Ascending aorta (tissue), 2 donors: ENCODE measurements at regions of chr6 and their contacts with region 1.

Region 1: DNA sequence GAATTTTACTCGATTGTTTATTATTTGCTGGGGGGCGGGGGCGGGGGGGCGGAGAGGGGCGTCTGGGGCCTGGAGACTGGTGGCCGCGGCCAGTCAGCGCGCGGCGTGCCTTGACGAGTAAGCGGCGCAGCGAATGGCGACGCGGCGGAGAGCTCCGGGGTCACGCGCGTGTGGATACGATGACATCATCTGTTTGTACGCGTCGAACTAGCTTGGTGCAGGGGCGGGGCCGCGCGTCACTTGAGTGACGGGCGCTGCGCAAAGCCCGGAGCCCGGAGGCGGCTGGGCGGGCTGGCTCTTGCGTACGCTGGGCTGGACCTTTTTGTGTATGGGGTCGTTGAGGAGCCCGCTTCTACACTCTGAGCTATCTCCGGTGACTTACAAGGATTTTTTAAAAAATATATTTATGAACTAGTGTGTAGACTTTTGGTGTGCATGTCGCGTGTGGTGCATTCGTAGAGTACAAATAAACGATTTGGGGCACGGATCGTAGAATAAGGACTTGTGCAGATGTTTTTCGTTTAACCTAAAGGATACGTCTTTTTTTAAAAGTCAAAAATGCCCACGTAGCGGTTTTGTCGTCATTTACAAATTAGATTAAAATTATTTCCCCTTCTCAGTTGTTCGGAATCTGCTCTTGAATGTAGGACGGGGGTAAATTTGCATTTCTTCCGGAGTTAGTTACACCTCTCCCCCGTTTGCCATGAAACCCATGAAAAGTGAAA is 2.2 kb upstream of the FOXO3 start:
- DNase-seq: peak; percentile 92 to 99
- H3K4me3 ChIP-seq: peak overlapping the region; percentile 87 to 93
- H3K27ac ChIP-seq: peak overlapping the region; percentile 98
- H3K4me1 ChIP-seq: peaks cover 4 to 14% of the 10 kb centered on the region in 2 donors
- H3K27me3 ChIP-seq: no peaks in the 10 kb centered on the region
- CTCF ChIP-seq: no peak

Region 2: GRCh38 chr6:108186226-108186625 is 372.3 kb before region 1 on chr6:
- intact Hi-C with region 1: no loop called
- DNase-seq: peak in 1 of 2 donors; percentile 40
- H3K4me3 ChIP-seq: no peak overlapping the region
- H3K27ac ChIP-seq: no peak overlapping the region
- H3K4me1 ChIP-seq: no peaks in the 10 kb centered on the region
- H3K27me3 ChIP-seq: no peaks in the 10 kb centered on the region
- CTCF ChIP-seq: no peak

Region 3: DNA sequence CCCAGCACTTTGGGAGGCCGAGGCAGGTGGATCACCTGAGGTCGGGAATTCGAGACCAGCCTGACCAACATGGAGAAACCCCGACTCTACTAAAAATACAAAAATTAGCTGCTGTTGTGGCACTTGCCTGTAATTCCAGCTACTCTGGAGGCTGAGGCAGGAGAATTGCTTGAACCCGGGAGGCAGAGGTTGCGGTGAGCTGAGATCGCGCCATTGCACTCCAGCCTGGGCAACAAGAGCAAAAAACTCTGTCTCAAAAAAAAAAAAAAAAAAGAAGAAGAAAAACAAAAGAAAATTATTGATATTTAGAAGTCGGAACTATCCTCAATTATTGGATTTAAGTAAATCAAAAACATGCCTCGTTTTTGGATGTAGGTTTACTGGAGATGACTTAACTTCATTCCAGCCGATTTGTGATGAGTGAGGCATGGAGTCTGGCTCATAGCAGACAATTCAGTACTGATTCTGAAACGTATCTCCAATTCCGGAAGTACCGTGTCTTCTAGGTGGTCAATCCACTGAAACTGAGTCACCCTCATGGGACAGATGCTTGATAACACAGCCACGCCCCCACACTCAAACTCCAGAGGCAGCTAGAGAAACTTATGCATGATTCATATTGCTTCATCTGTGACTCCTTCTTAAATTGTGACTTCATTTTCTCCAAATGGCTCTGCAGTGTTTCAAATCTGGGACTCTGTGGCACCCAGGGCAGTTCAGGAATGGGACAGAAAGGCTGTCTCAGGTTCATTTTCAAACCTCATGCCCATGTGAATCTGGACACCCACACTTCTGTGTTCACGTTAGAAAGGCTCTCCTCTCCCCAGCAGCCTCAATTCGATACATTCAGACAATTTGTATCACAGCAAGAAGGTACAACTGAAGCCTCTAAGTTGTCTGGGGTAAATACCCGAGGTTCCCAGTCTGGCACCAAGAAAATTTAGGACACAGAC is 179.3 kb after region 1 on chr6:
- intact Hi-C with region 1: loop called (anchors 2 kb)
- DNase-seq: peak; percentile 52 to 94
- H3K4me3 ChIP-seq: no peak overlapping the region
- H3K27ac ChIP-seq: peak overlapping the region; percentile 70 to 79
- H3K4me1 ChIP-seq: peaks cover 12 to 54% of the 10 kb centered on the region in 2 donors
- H3K27me3 ChIP-seq: no peaks in the 10 kb centered on the region
- CTCF ChIP-seq: no peak

Region 4: GRCh38 chr6:108848116-108848868 is 289.8 kb after region 1 on chr6 and contains the start of gene ARMC2:
- intact Hi-C with region 1: loop called (anchors 1 kb)
- DNase-seq: peak; percentile 63 to 94
- H3K4me3 ChIP-seq: peak within 1 kb of the TSS; percentile 53 to 79
- H3K27ac ChIP-seq: peak within 1 kb of the TSS; percentile 55 to 77
- H3K4me1 ChIP-seq: peaks cover 0 to 15% of the 10 kb centered on the region in 2 donors
- H3K27me3 ChIP-seq: no peaks in the 10 kb centered on the region
- CTCF ChIP-seq: no peak
- total RNA-seq, gene ARMC2: 0.11 TPM

Region 5: DNA sequence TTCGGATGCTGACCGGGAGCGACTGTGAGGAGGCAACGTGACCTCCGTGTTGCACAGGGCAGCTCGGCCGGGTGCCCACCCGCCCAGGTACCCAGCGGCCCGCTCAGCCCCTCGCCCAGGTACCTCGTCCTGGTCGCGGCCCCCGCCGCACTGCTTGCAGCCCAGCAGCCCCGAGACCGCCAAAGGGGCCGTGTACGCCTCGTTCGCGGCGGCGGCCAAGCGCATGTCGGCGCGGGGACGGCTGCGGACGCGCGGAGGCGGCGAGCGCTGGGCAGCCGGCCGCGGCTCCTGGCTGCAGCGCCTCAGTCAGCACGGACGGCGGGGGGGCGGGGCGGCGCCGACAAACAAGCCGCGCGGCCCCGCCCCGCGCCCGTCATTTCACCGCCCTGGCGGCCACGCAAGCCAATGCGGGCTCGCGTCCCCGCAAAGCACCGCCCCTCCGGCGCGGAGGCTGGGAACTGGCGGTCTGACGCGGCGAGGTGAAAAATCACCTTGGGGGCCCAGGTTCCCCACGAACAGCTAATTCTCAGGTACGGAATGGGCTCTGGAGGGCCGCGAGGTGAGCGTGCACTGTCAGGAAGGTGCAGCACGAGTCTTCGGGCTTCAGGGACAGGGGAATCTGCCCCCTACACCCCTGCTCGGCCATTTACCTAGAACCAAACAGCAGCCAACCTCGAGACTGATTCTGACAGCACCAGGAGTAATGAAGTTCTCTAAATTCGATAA is 450.9 kb after region 1 on chr6:
- intact Hi-C with region 1: loop called (anchors 5 kb)
- DNase-seq: peak; percentile 62 to 96
- H3K4me3 ChIP-seq: peak overlapping the region; percentile 69 to 99
- H3K27ac ChIP-seq: peak overlapping the region; percentile 77 to 94
- H3K4me1 ChIP-seq: peaks cover 0 to 11% of the 10 kb centered on the region in 2 donors
- H3K27me3 ChIP-seq: no peaks in the 10 kb centered on the region
- CTCF ChIP-seq: peak in 2 of 3 experiments; percentile 5 to 54

Region 6: GRCh38 chr6:109308018-109308492 is 749.5 kb after region 1 on chr6:
- intact Hi-C with region 1: loop called (anchors 10 kb)
- DNase-seq: peak; percentile 80 to 92
- H3K4me3 ChIP-seq: no peak overlapping the region
- H3K27ac ChIP-seq: peak overlapping the region; percentile 16 to 73
- H3K4me1 ChIP-seq: peaks cover 0 to 16% of the 10 kb centered on the region in 2 donors
- H3K27me3 ChIP-seq: no peaks in the 10 kb centered on the region
- CTCF ChIP-seq: no peak